PC-3 (cell line): ENCODE measurements at regions of chr12 and their contacts with region 1.

Region 1: DNA sequence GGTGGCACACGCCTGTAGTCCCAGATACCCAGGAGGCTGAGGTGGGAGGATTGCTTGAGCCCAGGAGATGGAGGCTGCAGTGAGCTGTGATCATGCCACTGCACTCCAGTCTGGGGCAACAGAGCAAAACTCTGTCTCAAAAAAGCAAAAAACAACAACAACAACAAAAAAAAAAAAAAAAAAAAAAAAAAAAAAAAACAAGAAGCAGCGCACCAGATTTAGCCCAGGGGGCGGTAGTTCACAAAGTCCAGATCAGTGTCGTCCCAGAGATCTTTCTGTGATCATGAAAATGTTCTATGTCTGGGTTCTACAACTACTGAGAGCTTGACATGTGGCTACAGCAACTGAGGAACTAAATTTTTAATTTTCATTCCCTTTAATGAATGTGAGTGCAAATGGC is 27.4 kb downstream of the OAS2 start:
- DNase-seq: peak; percentile 45
- ATAC-seq: no peak; the same call in 1 of the 2 replicates
- H3K4me3 ChIP-seq: no peak overlapping the region
- H3K27ac ChIP-seq: no peak overlapping the region
- H3K4me1 ChIP-seq: 0 out of 2 replicates have a peak, but pooled peaks cover 7% of the 10 kb centered on the region
- H3K27me3 ChIP-seq: no peaks in the 10 kb centered on the region
- CTCF ChIP-seq: peak; percentile 66

Region 2: DNA sequence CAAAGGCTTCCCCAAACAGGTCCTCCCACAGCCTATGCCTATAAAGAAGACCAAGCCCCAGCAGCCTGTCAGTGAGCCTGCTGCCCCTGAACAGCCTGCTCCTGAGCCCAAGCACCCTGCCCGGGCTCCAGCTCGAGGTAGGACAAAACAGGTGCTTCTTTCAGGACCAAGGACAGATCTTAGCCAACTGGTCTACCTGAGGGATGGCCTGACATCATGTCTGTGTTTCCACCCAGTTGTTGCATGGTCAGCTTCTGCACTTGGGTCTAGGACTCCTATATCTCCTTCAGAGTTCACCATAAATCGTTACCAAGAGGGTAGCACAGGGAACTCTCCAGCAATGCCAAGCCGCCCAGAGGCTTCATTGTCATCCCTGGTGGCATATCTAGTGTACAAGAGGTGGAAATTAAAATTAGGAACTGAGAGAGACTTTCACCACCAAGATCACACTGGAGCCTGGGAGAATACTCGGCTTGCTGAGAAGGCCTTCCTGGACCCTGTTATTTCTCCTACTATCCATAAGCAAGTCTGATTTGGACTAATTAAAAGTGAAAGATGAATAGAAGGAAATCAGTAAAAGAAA is 137.2 kb before region 1 on chr12:
- CTCF ChIA-PET with region 1: no interaction called
- POLR2A ChIA-PET with region 1: no interaction called
- intact Hi-C with region 1: no loop called
- DNase-seq: peak; percentile 55
- ATAC-seq: peak; percentile 45; the same call in 1 of the 2 replicates
- H3K4me3 ChIP-seq: no peak overlapping the region
- H3K27ac ChIP-seq: no peak overlapping the region
- H3K4me1 ChIP-seq: no peaks in the 10 kb centered on the region
- H3K27me3 ChIP-seq: peaks cover 79% of the 10 kb centered on the region
- CTCF ChIP-seq: no peak

Region 3: GRCh38 chr12:112916270-112916669 is 89.5 kb before region 1 on chr12:
- CTCF ChIA-PET with region 1: no interaction called
- POLR2A ChIA-PET with region 1: no interaction called
- intact Hi-C with region 1: no loop called
- DNase-seq: peak; percentile 80
- ATAC-seq: peak; percentile 85
- H3K4me3 ChIP-seq: no peak overlapping the region
- H3K27ac ChIP-seq: no peak overlapping the region
- H3K4me1 ChIP-seq: peaks cover 5% of the 10 kb centered on the region; the same call in 1 of the 2 replicates
- H3K27me3 ChIP-seq: no peaks in the 10 kb centered on the region
- CTCF ChIP-seq: no peak

Region 4: GRCh38 chr12:113030875-113031525 is 25.2 kb after region 1 on chr12:
- CTCF ChIA-PET with region 1: interaction called, 3 read pairs
- POLR2A ChIA-PET with region 1: no interaction called
- intact Hi-C with region 1: loop called (anchors 2 kb)
- DNase-seq: peak; percentile 86
- ATAC-seq: peak; percentile 98
- H3K4me3 ChIP-seq: no peak overlapping the region
- H3K27ac ChIP-seq: no peak overlapping the region
- H3K4me1 ChIP-seq: no peaks in the 10 kb centered on the region
- H3K27me3 ChIP-seq: no peaks in the 10 kb centered on the region
- CTCF ChIP-seq: peak; percentile 93